CD4-positive, alpha-beta memory T cell (primary cell): ENCODE measurements at regions of chr1 and their contacts with region 1.

Region 1: DNA sequence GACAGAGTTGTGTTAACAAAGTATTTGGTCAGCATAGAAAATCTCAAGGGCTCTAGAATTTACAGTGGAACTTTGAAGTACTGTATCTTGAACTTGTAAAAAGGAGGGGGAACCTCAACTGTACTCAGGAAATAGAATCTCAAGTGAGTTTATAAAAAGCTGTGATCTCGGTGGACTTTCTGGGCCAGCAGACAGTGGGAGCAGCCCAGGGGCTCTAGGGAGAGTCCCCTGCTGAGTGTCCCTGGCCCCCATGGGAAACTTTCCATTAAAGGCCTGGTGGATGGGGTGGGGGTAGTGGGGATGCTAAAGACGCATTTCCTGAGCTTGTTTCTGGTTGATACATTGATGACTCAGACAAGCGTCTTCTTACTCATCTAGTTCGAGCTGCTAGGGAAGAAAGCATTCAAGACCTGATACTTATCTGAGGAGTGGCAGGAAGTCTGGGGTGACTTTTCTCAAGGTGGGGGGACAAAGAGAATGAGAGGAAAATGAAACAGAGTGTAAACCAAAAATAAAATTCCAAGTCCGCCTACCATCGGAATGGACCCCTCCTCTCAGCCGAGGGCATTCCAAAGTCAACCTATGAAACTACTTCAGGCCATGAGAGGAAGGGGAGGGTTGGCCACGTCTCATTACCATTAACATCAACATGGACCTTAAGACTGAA is 65.5 kb downstream of the NID1 start:
- DNase-seq: peak; percentile 81 to 95 (median 83)
- H3K4me3 ChIP-seq: peak overlapping the region in 1 of 2 donors; percentile 15
- H3K4me3 Mint-ChIP-seq: peak overlapping the region; percentile 26 to 88 (median 73)
- H3K27ac ChIP-seq: peak overlapping the region; percentile 90
- H3K27ac Mint-ChIP-seq: peak overlapping the region; percentile 88 to 100 (median 99)
- H3K4me1 ChIP-seq: peaks cover 53% of the 10 kb centered on the region
- H3K4me1 Mint-ChIP-seq: peaks cover 37 to 58% (median 49%) of the 10 kb centered on the region in 4 donors
- H3K27me3 ChIP-seq: no peaks in the 10 kb centered on the region
- H3K27me3 Mint-ChIP-seq: no peaks in the 10 kb centered on the region

Region 2: GRCh38 chr1:235642011-235642942 is 357.1 kb before region 1 on chr1:
- CTCF ChIA-PET with region 1: no interaction called
- POLR2A ChIA-PET with region 1: no interaction called
- intact Hi-C with region 1: loop called (anchors 2 kb)
- DNase-seq: peak; percentile 67 to 93 (median 76)
- H3K4me3 ChIP-seq: peak overlapping the region; percentile 9 to 49
- H3K4me3 Mint-ChIP-seq: peak overlapping the region; percentile 70 to 94 (median 88)
- H3K27ac ChIP-seq: peak overlapping the region; percentile 66
- H3K27ac Mint-ChIP-seq: peak overlapping the region; percentile 85 to 99 (median 95)
- H3K4me1 ChIP-seq: peaks cover 23% of the 10 kb centered on the region
- H3K4me1 Mint-ChIP-seq: peaks cover 18 to 39% (median 27%) of the 10 kb centered on the region in 4 donors
- H3K27me3 ChIP-seq: no peaks in the 10 kb centered on the region
- H3K27me3 Mint-ChIP-seq: peaks cover 0 to 4% of the 10 kb centered on the region in 2 donors

Region 3: DNA sequence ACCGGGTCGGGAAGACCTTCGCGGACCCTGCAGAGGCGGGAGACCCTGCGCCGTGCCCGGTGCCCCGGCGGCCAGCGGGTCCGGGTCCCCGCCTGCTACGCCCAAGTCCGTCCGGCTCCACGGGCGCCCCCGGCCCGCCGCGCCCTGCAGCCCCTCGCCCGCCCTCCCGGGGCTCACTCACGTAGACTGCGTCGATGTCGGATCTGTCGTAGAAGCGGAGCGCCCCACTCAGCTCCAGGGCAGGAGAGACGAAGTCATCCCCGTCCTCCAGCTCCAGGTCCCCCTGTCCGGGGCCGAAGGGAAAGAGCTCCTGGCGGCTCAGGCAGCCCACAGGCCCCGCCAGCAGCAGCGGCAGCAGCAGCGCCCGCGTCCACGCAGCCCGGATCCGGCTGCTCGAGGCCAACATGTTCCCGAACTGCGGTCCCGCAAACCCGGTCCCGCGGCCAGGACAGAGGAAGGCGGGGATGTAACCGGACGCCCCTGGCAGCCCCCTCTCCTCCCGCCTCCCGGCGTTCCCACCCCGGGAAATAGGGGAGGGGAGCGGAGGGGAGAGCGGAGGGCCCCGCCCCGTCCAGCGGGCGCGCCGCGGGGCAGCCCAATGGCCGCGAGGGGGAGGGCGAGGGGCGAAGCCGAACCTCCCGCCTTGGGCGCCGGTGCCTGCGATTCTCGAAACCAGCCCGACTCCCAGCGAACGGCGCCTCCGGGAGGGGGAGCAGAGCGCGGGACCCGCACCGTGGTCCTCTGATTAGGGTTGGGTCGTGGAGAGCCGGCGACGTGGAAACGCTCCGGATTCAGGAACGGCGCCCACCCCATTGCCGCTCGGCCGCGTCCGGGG is 65.5 kb after region 1 on chr1 and contains the start of gene NID1:
- CTCF ChIA-PET with region 1: no interaction called
- POLR2A ChIA-PET with region 1: interaction called, 6 read pairs
- intact Hi-C with region 1: loop called (anchors 10 kb)
- DNase-seq: peak in 4 of 5 donors; percentile 17 to 39 (median 23)
- H3K4me3 ChIP-seq: peak within 1 kb of the TSS in 1 of 2 donors; percentile 44
- H3K4me3 Mint-ChIP-seq: peak within 1 kb of the TSS; percentile 65 to 76 (median 72)
- H3K27ac ChIP-seq: no peak within 1 kb of the TSS
- H3K27ac Mint-ChIP-seq: peak within 1 kb of the TSS in 2 of 7 donors; percentile 47 to 48
- H3K4me1 ChIP-seq: peaks cover 30% of the 10 kb centered on the region
- H3K4me1 Mint-ChIP-seq: peaks cover 16 to 29% (median 23%) of the 10 kb centered on the region in 4 donors
- H3K27me3 ChIP-seq: peaks cover 11% of the 10 kb centered on the region
- H3K27me3 Mint-ChIP-seq: peaks cover 16 to 19% of the 10 kb centered on the region in 2 donors
- total RNA-seq, gene NID1: 0.08 to 0.17 TPM